A673 (cell line): ENCODE measurements at regions of chr6 and their contacts with region 1.

Region 1: GRCh38 chr6:7742223-7742785 is 16.4 kb downstream of the BMP6 start:
- DNase-seq: no peak
- H3K4me3 ChIP-seq: no peak overlapping the region
- H3K27ac ChIP-seq: no peak overlapping the region
- H3K4me1 ChIP-seq: no peaks in the 10 kb centered on the region
- H3K27me3 ChIP-seq: no peaks in the 10 kb centered on the region
- CTCF ChIP-seq: no peak

Region 2: GRCh38 chr6:7787731-7788130 is 45.4 kb after region 1 on chr6:
- CTCF ChIA-PET with region 1: no interaction called
- POLR2A ChIA-PET with region 1: no interaction called
- intact Hi-C with region 1: loop called (anchors 2 kb)
- DNase-seq: no peak
- H3K4me3 ChIP-seq: no peak overlapping the region
- H3K27ac ChIP-seq: no peak overlapping the region
- H3K4me1 ChIP-seq: no peaks in the 10 kb centered on the region
- H3K27me3 ChIP-seq: no peaks in the 10 kb centered on the region
- CTCF ChIP-seq: no peak